IMR-90 (cell line): ENCODE measurements at regions of chr4 and their contacts with region 1.

Region 1: GRCh38 chr4:159227984-159228383 is 125.1 kb downstream of the RAPGEF2 start:
- DNase-seq: peak; percentile 92
- ATAC-seq: peak; percentile 74
- H3K4me3 ChIP-seq: peak overlapping the region; percentile 26
- H3K27ac ChIP-seq: peak overlapping the region; percentile 47
- H3K4me1 ChIP-seq: peaks cover 4% of the 10 kb centered on the region; the same call in 1 of the 2 replicates
- H3K27me3 ChIP-seq: no peaks in the 10 kb centered on the region
- CTCF ChIP-seq: 0 out of 2 replicates have a peak, but pooled peaks have one; percentile 19
- POLR2A ChIP-seq: peak; percentile 79; the same call in 1 of the 2 replicates
- RAD21 ChIP-seq: no peak

Region 2: GRCh38 chr4:158671915-158672806 is 555.8 kb before region 1 on chr4 and contains the start of gene ETFDH:
- CTCF ChIA-PET with region 1: no interaction called
- POLR2A ChIA-PET with region 1: no interaction called
- dilution Hi-C with region 1: no loop called
- in situ Hi-C with region 1: no loop called
- intact Hi-C with region 1: loop called (anchors 1 kb)
- DNase-seq: peak; percentile 99
- ATAC-seq: peak; percentile 90
- H3K4me3 ChIP-seq: peak within 1 kb of the TSS; percentile 65
- H3K27ac ChIP-seq: peak within 1 kb of the TSS; percentile 81
- H3K4me1 ChIP-seq: no peaks in the 10 kb centered on the region
- H3K27me3 ChIP-seq: no peaks in the 10 kb centered on the region
- CTCF ChIP-seq: peak; percentile 62
- POLR2A ChIP-seq: no peak
- RAD21 ChIP-seq: peak; percentile 46
- total RNA-seq, gene ETFDH: 14.0 and 18.3 TPM in 2 replicates